GM10248 (cell line): ENCODE measurements at regions of chr15 and their contacts with region 1.

Region 1: GRCh38 chr15:71743861-71744382 is 66.4 kb upstream of the NR2E3 start:
- DNase-seq: peak; percentile 65
- CTCF ChIP-seq: peak; percentile 65

Region 2: GRCh38 chr15:71730277-71731144 is 13.4 kb before region 1 on chr15:
- CTCF ChIA-PET with region 1: interaction called, 17 read pairs
- POLR2A ChIA-PET with region 1: no interaction called
- DNase-seq: peak; percentile 67
- CTCF ChIP-seq: peak; percentile 80

Region 3: GRCh38 chr15:71757741-71758520 is 14.0 kb after region 1 on chr15:
- CTCF ChIA-PET with region 1: interaction called, 45 read pairs
- POLR2A ChIA-PET with region 1: no interaction called
- DNase-seq: no peak
- CTCF ChIP-seq: no peak

Region 4: DNA sequence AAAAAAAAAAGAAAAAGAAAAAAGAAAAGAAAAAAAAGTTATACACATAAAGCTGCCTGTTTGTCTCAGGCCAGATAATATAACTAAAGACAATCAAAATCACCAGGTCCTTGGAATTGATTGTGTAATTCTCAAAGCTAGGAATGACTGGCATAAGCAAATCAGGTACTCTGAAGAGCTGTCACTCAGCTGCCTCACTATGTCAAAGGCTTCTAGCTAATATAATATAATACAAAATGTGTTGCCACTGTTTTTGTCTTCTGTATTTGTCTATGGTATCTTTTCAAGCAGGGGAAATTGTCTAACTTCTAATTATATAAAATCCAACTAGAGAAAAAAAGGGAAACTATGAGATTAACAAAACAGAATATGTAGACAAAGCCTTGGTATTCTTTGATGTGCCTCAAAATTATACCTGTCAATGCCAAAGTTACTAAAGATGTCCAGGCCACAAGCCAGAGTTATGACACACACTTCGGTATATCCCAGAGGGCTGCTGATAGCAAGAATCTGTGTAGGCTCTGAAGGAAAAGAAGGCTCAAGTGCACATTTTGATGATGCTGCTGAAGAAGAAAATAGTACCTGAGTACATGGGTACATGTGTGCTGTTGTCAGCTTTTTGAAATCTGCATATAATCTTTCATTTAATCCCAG is 29.4 kb after region 1 on chr15:
- CTCF ChIA-PET with region 1: interaction called, 15 read pairs
- POLR2A ChIA-PET with region 1: no interaction called
- DNase-seq: no peak
- CTCF ChIP-seq: no peak

Region 5: DNA sequence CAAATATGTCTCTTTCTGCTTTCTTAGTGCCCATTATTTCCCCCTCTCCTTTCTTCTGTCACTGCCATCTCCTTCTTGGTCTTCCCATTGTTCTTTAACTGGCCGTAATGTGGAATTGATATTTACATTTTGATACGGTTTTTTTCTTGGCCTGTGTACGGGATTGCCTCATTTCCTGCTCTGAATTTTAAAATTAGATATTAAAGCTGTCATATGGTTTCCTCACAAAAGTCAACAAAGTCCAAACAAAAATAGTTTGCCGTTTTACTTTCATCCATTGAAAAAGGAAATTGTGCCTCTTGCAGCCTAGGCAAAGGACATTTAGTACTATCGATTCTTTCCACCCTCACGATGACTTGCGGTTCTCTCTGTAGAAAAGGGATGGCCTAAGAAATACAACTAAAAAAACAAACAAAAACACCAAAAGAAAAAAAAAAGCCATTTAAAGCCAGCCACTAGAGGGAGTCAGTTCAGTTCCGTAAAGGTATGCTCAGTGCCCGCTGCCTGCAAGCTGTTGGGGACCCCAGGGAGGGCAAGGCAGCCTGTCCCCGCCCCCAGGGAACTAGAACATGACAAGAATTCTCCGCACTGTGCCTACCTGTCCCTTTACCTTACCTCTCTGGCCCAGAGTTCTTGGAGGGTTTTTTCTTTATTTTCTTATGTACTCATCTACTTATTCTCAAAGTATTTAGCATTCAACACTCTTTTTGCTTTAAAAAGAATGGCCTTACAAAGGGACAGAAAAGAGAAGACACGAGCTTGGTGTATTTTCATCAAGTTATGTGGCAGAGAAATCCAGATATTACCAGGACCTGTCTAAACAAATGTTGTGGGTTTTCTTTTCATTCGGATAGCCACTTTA is 36.4 kb after region 1 on chr15:
- CTCF ChIA-PET with region 1: interaction called, 13 read pairs
- POLR2A ChIA-PET with region 1: no interaction called
- DNase-seq: peak; percentile 74
- CTCF ChIP-seq: peak; percentile 67

Region 6: DNA sequence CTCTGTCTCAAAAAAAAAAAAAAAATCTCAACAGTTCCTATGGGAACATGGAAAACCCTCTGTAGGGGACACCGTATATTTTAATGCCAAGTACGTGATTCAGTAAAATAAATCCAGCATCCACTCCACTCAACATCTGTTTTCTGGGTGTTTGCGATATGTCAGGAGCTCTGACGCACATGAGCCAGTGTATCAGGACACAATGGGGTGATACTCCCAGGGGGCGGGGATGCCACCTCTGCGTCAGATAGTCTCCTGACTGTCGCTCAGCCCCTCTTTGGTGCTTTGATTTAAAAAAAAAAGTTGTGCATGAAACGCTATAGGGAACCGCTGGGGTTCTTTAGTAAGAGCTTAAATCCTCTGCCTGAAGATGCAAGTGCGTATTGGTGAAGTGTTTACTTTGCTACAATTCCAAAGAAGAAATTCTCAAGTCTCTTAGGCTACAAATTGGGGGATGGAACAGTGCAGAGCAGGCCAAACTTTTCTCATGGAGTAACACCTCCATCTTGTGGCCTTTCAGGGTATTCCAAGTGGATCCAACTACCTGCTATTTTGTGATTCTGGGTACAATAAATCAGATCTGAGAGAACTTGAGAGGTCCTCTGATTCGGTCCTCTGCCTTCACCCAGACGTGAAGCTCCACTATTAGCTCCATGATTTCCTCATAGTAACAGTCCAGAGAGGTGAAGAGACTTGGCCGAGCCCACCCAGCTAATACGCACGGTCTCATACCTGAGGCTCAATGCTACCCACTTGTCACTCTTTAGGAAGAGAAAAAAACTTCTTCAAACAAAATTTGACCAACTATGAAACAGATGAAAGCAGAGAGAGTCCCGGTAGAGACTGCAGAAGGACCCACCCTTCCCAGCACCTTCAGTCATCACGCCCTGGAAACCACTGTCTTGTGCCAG is 57.2 kb after region 1 on chr15:
- CTCF ChIA-PET with region 1: interaction called, 132 read pairs
- POLR2A ChIA-PET with region 1: interaction called, 3 read pairs
- DNase-seq: peak; percentile 65
- CTCF ChIP-seq: peak; percentile 70

Region 7: GRCh38 chr15:72161361-72162260 is 417.7 kb after region 1 on chr15:
- CTCF ChIA-PET with region 1: interaction called, 48 read pairs
- POLR2A ChIA-PET with region 1: no interaction called
- DNase-seq: no peak
- CTCF ChIP-seq: no peak